Caki2 (cell line): ENCODE measurements at regions of chr7 and their contacts with region 1.

Region 1: GRCh38 chr7:95199779-95200558 is 124.4 kb downstream of the PON1 start:
- DNase-seq: peak; percentile 49

Region 2: GRCh38 chr7:95104739-95105138 is 95.2 kb before region 1 on chr7:
- in situ Hi-C with region 1: loop called (anchors 10 kb)
- DNase-seq: peak; percentile 85